ENCODE measurements at regions of chr6 and their contacts with region 1.

Region 1: DNA sequence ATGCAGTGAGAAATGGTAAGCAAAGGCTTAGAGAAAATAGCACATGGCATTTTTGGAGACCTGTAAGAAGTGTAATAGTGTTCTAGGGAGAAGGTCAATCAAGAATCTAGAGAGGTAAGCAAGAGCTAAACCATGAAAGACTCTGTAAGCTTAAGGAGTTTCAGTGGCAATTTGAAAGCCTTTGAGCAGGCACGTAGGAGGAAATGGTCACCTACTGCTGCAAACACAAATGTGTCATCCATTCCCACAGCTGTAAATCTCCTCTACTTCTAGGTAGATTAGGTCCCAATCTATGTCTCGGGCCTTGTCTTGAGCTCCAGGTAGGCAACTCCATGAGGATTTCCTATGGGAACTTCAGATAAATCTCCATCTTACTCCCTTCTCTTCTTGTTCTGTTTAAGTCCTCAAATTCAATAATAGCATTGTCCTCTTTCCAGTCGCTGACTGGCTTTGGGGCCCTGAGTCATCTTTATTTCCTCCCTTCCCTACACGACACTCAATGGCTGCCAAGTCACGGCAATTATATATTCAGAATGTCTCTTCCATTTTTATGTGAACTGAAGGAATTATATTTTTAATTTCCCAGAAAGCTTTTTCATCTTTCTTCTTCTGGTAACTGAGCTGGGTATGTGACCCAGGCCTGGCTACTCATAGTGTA is 24.2 kb upstream of the PAQR8 start:
- DNase-seq: no peak
- ATAC-seq: no peak
- H3K4me3 ChIP-seq: no peak overlapping the region
- H3K4me3 Mint-ChIP-seq: no peak overlapping the region
- H3K27ac ChIP-seq: no peak overlapping the region
- H3K27ac Mint-ChIP-seq: peak overlapping the region; percentile 1 to 97
- H3K4me1 ChIP-seq: peaks cover 32 to 43% of the 10 kb centered on the region in 2 experiments
- H3K4me1 Mint-ChIP-seq: peaks cover 64 to 69% (median 65%) of the 10 kb centered on the region in 3 donors
- H3K27me3 ChIP-seq: no peaks in the 10 kb centered on the region
- H3K27me3 Mint-ChIP-seq: no peaks in the 10 kb centered on the region

Region 2: DNA sequence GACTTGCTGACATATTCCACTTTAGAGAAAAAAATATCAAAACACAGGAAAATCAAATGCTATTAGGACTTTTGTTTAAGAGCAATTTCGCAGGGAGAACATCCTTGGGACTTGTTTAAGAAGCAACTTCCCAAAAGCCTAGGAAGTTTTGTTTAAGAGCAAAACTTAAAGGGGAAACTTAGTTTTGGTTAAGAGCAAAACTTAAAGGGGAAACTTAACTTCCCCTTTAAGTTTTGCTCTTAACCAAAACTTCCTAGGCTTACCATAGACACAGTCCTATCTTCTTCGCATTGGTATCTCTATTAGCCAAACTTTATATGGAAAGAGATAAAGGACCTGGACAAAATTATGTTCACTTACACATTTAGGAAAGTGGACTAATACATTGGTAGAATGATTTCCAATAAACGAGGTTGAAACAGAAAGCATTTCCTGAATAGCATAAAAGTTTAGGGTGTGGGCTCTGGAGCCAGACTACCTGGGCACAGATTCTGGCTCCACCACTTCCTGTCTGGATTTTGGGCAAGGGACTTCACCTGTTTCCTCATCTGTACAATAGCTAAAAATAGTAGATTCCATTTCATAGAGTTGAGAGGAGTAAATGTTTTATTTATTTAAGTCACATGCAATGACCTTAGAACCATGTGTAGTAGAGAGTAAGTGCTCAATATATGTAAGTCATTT is 39.9 kb after region 1 on chr6:
- CTCF ChIA-PET with region 1: no interaction called
- POLR2A ChIA-PET with region 1: no interaction called
- DNase-seq: no peak
- ATAC-seq: peak in 3 of 4 experiments; percentile 14 to 53 (median 28)
- H3K4me3 ChIP-seq: no peak overlapping the region
- H3K4me3 Mint-ChIP-seq: peak overlapping the region; percentile 32 to 54 (median 52)
- H3K27ac ChIP-seq: no peak overlapping the region
- H3K27ac Mint-ChIP-seq: peak overlapping the region; percentile 86 to 93
- H3K4me1 ChIP-seq: peaks cover 35 to 47% of the 10 kb centered on the region in 2 experiments
- H3K4me1 Mint-ChIP-seq: peaks cover 77 to 80% (median 79%) of the 10 kb centered on the region in 3 donors
- H3K27me3 ChIP-seq: no peaks in the 10 kb centered on the region
- H3K27me3 Mint-ChIP-seq: no peaks in the 10 kb centered on the region

Region 3: GRCh38 chr6:53192682-53193188 is 855.0 kb after region 1 on chr6:
- CTCF ChIA-PET with region 1: no interaction called
- POLR2A ChIA-PET with region 1: interaction called in 1 of 2 experiments, 13 read pairs
- DNase-seq: no peak
- ATAC-seq: no peak
- H3K4me3 ChIP-seq: no peak overlapping the region
- H3K4me3 Mint-ChIP-seq: no peak overlapping the region
- H3K27ac ChIP-seq: no peak overlapping the region
- H3K27ac Mint-ChIP-seq: no peak overlapping the region
- H3K4me1 ChIP-seq: peaks cover 9 to 17% of the 10 kb centered on the region in 2 experiments
- H3K4me1 Mint-ChIP-seq: peaks cover 13 to 31% (median 23%) of the 10 kb centered on the region in 3 donors
- H3K27me3 ChIP-seq: no peaks in the 10 kb centered on the region
- H3K27me3 Mint-ChIP-seq: no peaks in the 10 kb centered on the region